ENCODE measurements at regions of chr5 and their contacts with region 1.

Region 1: GRCh38 chr5:141960449-141961202 is 2.6 kb upstream of the PCDH12 start:
- DNase-seq: peak; percentile 86 to 92
- ATAC-seq: peak; percentile 78 to 87 (median 82)
- H3K4me3 ChIP-seq: no peak overlapping the region
- H3K27ac ChIP-seq: peak overlapping the region in 8 of 10 donors; percentile 36 to 89 (median 82)
- H3K4me1 ChIP-seq: peaks cover 5 to 55% (median 41%) of the 10 kb centered on the region in 9 donors
- H3K27me3 ChIP-seq: no peaks in the 10 kb centered on the region
- CTCF ChIP-seq: peak; percentile 86 to 95 (median 91)

Region 2: DNA sequence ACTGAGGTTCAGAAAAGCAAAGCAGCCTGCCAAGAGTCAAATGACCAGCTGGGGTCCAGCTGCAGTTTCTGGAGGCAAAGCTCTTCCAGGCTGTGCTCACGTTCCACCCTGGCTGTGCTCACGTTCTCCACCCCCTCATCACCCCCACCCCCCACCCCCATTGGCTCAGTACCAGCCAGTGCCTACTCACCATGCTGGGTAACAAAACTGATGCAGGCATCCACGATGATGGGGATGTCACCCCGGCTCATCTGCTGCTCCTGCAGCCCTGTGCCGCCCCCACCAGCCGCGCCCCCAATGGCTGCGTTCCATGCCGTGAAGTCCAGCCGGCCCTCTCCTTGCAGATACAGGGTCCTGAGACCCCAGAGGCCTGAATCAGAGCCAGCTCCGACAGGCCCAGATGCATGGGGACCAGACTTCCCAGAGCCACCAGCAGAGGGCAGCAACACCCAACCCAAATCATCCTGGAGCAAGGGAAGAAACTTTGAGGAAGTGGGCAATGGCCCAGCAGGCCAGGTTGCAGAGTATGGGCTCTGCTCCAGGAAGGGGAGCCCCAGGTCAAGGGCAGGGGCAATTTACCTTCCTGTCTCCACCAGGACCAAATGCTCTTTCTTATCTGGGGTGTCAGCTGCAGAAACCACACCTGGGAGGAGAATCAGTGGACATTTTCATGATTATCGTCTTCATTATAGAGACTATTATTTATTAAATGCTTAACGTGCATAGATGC is 295.7 kb before region 1 on chr5:
- intact Hi-C with region 1: loop called in 1 of 10 experiments (anchors 1 kb)
- DNase-seq: peak; percentile 70 to 79
- ATAC-seq: peak; percentile 75 to 85 (median 80)
- H3K4me3 ChIP-seq: no peak overlapping the region
- H3K27ac ChIP-seq: no peak overlapping the region
- H3K4me1 ChIP-seq: peaks cover 0 to 10% (median 4%) of the 10 kb centered on the region in 9 donors
- H3K27me3 ChIP-seq: no peaks in the 10 kb centered on the region
- CTCF ChIP-seq: peak; percentile 76 to 93 (median 89)

Region 3: GRCh38 chr5:141691867-141692532 is 268.6 kb before region 1 on chr5:
- intact Hi-C with region 1: loop called (anchors 1 to 5 kb)
- DNase-seq: peak; percentile 85 to 90
- ATAC-seq: peak; percentile 83 to 96 (median 90)
- H3K4me3 ChIP-seq: peak overlapping the region in 8 of 10 donors; percentile 18 to 48 (median 40)
- H3K27ac ChIP-seq: peak overlapping the region in 1 of 10 donors; percentile 28
- H3K4me1 ChIP-seq: peaks cover 0 to 39% (median 20%) of the 10 kb centered on the region in 9 donors
- H3K27me3 ChIP-seq: no peaks in the 10 kb centered on the region
- CTCF ChIP-seq: peak; percentile 99 to 100 (median 99)

Region 4: GRCh38 chr5:141762790-141763368 is 197.7 kb before region 1 on chr5:
- intact Hi-C with region 1: loop called in 1 of 10 experiments (anchors 5 kb)
- DNase-seq: peak in 1 of 2 donors; percentile 49
- ATAC-seq: peak; percentile 46 to 82 (median 68)
- H3K4me3 ChIP-seq: no peak overlapping the region
- H3K27ac ChIP-seq: peak overlapping the region in 2 of 10 donors; percentile 26 to 72
- H3K4me1 ChIP-seq: peaks cover 2 to 33% (median 15%) of the 10 kb centered on the region in 9 donors
- H3K27me3 ChIP-seq: peaks cover 0 to 33% (median 17%) of the 10 kb centered on the region in 7 donors
- CTCF ChIP-seq: peak in 5 of 9 donors; percentile 32 to 50 (median 42)

Region 5: GRCh38 chr5:141889282-141889871 is 71.2 kb before region 1 on chr5:
- intact Hi-C with region 1: loop called in 8 of 10 experiments (anchors 5 to 10 kb)
- DNase-seq: no peak
- ATAC-seq: no peak
- H3K4me3 ChIP-seq: no peak overlapping the region
- H3K27ac ChIP-seq: no peak overlapping the region
- H3K4me1 ChIP-seq: no peaks in the 10 kb centered on the region
- H3K27me3 ChIP-seq: peaks cover 0 to 31% (median 5%) of the 10 kb centered on the region in 7 donors
- CTCF ChIP-seq: peak in 6 of 9 donors; percentile 19 to 54 (median 44)

Region 6: GRCh38 chr5:141923448-141924352 is 36.9 kb before region 1 on chr5 and contains the start of gene DELE1:
- intact Hi-C with region 1: loop called in 7 of 10 experiments (anchors 2 to 5 kb)
- DNase-seq: peak; percentile 95 to 97
- ATAC-seq: peak; percentile 98 to 99 (median 98)
- H3K4me3 ChIP-seq: peak within 1 kb of the TSS; percentile 37 to 81 (median 66)
- H3K27ac ChIP-seq: peak within 1 kb of the TSS; percentile 84 to 99 (median 98)
- H3K4me1 ChIP-seq: peaks cover 4 to 55% (median 37%) of the 10 kb centered on the region in 9 donors
- H3K27me3 ChIP-seq: no peaks in the 10 kb centered on the region
- CTCF ChIP-seq: no peak
- total RNA-seq, gene DELE1: 82.1 to 192 (median 141) TPM

Measured in heart right ventricle (tissue), 16 donors.